Panc1 (cell line): ENCODE measurements at regions of chr1 and their contacts with region 1.

Region 1: GRCh38 chr1:29849038-29849750 is 612.9 kb downstream of the PTPRU start:
- DNase-seq: peak; percentile 7
- ATAC-seq: peak; percentile 58; the same call in 1 of the 2 replicates
- H3K4me3 ChIP-seq: no peak overlapping the region
- H3K27ac ChIP-seq: no peak overlapping the region
- H3K4me1 ChIP-seq: no peaks in the 10 kb centered on the region
- H3K27me3 ChIP-seq: no peaks in the 10 kb centered on the region
- CTCF ChIP-seq: peak; percentile 77

Region 2: GRCh38 chr1:29513357-29513756 is 335.8 kb before region 1 on chr1:
- CTCF ChIA-PET with region 1: no interaction called
- POLR2A ChIA-PET with region 1: no interaction called
- in situ Hi-C with region 1: no loop called
- intact Hi-C with region 1: loop called (anchors 10 kb)
- DNase-seq: peak; percentile 18
- ATAC-seq: peak; percentile 96
- H3K4me3 ChIP-seq: no peak overlapping the region
- H3K27ac ChIP-seq: no peak overlapping the region
- H3K4me1 ChIP-seq: no peaks in the 10 kb centered on the region
- H3K27me3 ChIP-seq: peaks cover 12% of the 10 kb centered on the region
- CTCF ChIP-seq: peak; percentile 80

Region 3: DNA sequence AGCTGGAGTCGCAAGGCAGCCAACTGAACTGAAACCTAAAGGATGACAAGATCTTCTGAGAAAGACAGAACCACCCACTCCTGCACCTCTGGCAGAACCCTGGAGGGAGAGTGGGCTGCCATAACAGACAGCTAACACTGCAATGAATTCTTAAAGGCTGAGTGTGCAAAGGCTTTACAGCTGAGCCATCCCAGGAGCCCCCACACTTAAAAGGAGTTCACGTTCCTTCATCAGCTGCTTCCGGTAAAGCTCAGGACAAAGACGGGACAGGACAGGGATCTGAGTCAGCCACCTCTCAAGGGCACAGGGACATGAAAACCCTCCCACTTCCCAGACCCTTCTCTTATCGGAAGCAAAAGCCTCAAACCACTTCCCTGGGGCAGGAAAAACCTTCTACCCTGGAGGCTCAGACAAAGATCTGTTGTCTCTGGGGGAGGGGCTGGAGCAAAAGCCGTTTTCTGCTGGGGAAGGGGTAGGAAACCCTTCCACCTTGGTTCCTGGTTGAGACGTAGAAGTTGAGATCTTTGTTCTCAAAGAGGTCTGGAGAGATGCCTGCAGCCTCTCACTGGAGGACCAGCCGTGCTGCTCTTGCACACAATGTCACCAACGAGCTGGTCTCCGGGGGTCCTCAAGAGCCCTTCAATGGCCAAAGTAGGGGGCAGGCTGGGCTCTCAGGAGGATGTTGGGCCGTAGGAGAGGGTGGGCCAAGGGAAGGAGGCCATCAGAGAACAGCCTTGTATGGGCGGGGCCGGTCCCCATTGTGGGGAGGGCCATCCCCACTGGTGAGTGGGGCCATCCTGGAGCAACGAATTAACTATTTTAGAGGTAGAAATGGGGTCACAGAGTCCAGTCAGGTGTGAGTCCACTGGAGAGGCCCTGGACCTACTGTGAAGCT is 160.5 kb before region 1 on chr1:
- CTCF ChIA-PET with region 1: no interaction called
- POLR2A ChIA-PET with region 1: no interaction called
- in situ Hi-C with region 1: no loop called
- intact Hi-C with region 1: no loop called
- DNase-seq: no peak
- ATAC-seq: no peak
- H3K4me3 ChIP-seq: no peak overlapping the region
- H3K27ac ChIP-seq: no peak overlapping the region
- H3K4me1 ChIP-seq: no peaks in the 10 kb centered on the region; the same call in 1 of the 2 replicates
- H3K27me3 ChIP-seq: peaks cover 5% of the 10 kb centered on the region
- CTCF ChIP-seq: no peak

Region 4: DNA sequence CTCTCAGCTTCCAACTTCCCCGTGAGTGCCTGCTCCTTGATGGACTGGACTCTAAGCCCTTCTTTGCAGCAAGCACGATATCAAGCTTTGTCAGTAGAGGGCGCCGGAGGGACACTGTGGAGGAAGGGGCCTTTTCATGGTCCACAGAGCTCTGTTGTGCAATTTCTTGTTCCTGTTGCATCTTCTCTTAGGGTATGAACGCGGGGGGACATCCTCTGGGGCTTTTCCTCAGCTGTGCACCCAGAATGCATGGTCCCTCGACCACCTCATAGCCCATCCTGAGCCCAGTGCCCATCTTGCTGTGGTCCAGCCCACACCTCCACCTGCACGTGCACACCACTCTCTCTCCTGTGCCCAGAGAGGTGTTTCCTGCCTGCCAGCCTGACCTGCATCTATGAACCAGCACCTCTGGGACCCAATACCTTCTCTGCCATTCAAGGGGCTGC is 56.1 kb before region 1 on chr1:
- CTCF ChIA-PET with region 1: interaction called, 4 read pairs
- POLR2A ChIA-PET with region 1: no interaction called
- in situ Hi-C with region 1: no loop called
- intact Hi-C with region 1: loop called (anchors 5 kb)
- DNase-seq: peak; percentile 51
- ATAC-seq: peak; percentile 93
- H3K4me3 ChIP-seq: no peak overlapping the region
- H3K27ac ChIP-seq: no peak overlapping the region
- H3K4me1 ChIP-seq: no peaks in the 10 kb centered on the region
- H3K27me3 ChIP-seq: no peaks in the 10 kb centered on the region
- CTCF ChIP-seq: peak; percentile 95

Region 5: GRCh38 chr1:30101477-30102227 is 252.5 kb after region 1 on chr1:
- CTCF ChIA-PET with region 1: no interaction called
- POLR2A ChIA-PET with region 1: no interaction called
- in situ Hi-C with region 1: no loop called
- intact Hi-C with region 1: no loop called
- DNase-seq: no peak
- ATAC-seq: peak; percentile 68; the same call in 1 of the 2 replicates
- H3K4me3 ChIP-seq: no peak overlapping the region
- H3K27ac ChIP-seq: no peak overlapping the region
- H3K4me1 ChIP-seq: no peaks in the 10 kb centered on the region
- H3K27me3 ChIP-seq: peaks cover 3% of the 10 kb centered on the region
- CTCF ChIP-seq: no peak